ENCODE measurements at regions of chr1 and their contacts with region 1.

Region 1: DNA sequence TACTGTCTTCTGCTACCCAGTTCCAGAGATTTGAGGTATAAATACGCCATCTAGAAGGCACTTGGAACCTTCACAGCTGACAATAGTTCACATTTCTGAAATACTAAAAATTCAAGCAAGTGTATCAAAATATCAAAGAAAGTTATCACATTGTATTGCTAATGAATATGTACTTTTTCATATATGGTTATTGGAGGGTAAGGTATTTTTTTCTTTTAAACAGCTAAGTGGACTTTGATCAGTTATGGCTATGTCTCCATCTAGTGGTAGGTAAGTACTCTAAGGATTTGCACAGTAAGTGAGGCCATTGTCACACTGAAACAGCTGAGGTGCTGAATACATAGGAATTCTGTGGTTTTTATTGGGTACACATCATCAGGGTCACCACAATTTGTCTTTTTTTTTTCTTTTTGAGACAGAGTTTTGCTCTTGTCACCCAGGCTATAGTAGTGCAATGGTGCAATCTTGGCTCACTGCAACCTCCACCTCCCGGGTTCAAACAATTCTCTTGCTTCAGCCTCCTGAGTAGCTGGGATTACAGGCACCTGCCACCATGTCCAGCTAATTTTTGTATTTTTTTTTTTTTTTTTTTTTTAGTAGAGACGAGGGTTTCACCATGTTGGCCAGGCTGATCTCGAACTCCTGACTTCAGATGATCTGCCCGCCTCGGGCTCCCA is 49.1 kb upstream of the CR2 start:
- DNase-seq: no peak
- ATAC-seq: peak; percentile 57

Region 2: GRCh38 chr1:207084701-207085180 is 320.2 kb before region 1 on chr1:
- intact Hi-C with region 1: loop called (anchors 2 kb)
- DNase-seq: no peak
- ATAC-seq: no peak

Region 3: DNA sequence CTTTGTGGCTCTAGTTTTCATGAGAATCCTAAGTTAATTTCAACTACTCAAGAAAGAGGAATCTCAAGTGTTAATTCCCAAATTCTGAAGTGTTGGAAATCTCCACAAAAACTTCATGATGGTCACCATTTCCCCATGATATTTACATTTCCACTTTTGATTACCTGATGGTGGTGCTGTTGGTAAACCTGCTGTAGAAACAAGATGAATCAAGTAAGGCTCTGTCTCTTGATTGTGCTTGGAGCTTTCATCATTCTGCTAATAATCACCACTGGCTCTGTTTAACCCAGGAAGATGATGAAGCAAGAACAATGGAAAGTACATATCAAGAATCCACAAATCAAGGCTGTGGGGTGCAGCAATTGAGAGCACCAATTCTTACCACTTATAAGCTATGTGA is 223.1 kb before region 1 on chr1:
- intact Hi-C with region 1: loop called (anchors 5 kb)
- DNase-seq: no peak
- ATAC-seq: no peak

Region 4: GRCh38 chr1:207259391-207259790 is 145.6 kb before region 1 on chr1:
- intact Hi-C with region 1: loop called (anchors 5 kb)
- DNase-seq: no peak
- ATAC-seq: no peak

Region 5: DNA sequence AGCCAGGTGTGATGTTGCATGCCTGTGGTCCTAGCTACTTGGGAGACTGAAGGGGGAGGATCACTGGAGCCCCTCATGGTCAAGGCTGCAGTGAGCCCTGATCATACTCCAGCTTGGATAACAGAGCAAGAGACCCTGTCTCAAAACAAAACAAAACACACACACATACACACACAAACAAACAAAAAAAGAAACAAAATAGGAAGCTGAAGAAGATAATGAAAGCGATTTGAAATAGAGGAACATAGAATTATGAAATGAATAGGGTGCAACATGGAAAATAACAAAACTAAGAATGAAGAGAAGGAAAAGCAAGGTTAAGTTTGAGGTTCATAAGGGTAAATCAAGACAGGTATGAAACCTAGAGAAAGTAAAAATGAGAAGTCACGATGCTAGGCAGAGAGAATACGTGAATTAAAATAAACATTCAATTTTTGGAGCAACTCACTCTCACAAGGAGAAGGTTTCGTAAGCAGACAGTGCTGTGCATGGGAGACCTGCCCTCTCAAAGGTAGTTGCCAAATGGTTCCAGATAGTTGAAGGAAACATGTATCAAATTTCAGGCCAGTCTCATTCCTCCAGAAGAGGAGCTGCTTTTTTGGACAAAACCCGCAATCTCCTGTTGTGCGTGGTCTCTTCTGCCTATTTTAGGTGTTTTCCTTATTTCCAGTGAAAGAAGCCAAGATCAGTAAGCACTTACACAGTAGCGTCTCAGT is 350.1 kb after region 1 on chr1:
- intact Hi-C with region 1: no loop called
- DNase-seq: no peak
- ATAC-seq: no peak

Measured in Right ventricle myocardium inferior (tissue), 1 donor.